Pancreas (tissue), 10 donors: ENCODE measurements at regions of chr14 and their contacts with region 1.

Region 1: DNA sequence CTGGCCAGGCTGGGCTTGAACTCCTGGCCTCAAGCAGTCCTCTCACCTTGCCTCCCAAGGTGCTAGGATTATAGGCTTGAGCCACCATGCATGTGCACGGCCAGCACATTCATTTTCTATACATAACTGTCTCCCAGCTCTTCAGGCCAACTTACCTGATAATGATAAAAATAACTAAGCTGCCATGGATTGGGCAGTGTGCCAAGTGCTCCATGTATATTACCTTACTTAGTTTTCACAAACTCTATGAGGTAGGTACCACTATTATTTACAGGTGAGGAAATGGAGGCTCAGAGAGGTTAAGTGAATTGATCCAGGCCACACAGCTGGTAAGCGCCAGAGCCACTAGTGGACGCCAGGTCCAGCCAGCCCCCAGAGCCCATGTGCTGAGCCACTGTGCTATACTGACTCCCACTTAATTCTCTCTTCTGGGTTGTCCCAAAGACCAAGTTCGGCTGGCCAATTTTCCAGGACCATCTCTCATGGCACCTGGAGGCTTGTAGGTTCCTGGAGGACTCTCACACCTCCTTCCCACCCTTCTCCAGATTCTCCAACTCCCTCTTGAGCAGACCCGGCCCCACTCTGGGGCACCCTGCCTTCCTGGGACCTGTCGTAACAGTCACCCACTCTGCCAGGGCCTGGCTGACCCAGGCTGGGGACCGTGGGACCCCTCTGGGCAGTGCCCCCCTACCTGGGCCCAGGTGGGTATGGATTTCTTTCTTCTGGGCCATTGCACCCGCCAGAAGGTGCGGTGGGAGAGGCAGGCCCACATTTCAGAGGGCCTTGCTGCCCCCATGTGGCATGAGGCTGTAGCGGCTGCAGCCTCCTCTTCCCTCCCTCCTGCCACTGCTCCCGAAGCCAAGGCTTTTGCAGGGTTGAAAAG is 30.2 kb upstream of the CIPC start:
- DNase-seq: peak; percentile 61 to 90 (median 78)
- ATAC-seq: peak; percentile 77 to 95 (median 92)
- H3K4me3 ChIP-seq: no peak overlapping the region
- H3K27ac ChIP-seq: no peak overlapping the region
- H3K4me1 ChIP-seq: no peaks in the 10 kb centered on the region
- H3K27me3 ChIP-seq: no peaks in the 10 kb centered on the region
- CTCF ChIP-seq: peak; percentile 71 to 85 (median 76)

Region 2: DNA sequence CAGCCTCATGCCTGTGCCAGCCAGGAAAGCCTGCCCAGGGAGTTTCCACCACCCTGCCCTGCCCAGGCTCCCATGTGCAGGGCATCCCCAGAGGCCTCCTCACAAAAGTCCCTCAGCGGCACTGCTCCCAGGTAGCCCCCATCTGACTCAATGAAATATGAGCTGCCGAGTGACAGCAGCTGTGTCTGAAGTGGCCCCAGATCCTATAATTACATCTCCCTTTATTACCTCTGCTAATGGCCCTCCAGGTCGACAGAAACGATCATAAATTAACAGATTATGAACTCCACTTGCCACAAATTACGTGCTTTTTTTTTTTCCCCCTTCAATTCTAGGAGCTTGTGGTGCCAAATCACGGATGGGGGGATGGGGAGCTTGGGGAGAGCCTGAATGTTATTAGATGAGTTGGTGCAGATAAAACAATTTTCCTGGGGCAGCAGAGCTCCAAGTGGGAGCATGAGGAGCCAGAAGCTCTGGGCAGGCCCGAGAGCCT is 581.6 kb before region 1 on chr14:
- intact Hi-C with region 1: no loop called
- DNase-seq: no peak
- ATAC-seq: peak in 1 of 4 donors; percentile 36
- H3K4me3 ChIP-seq: no peak overlapping the region
- H3K27ac ChIP-seq: no peak overlapping the region
- H3K4me1 ChIP-seq: no peaks in the 10 kb centered on the region
- H3K27me3 ChIP-seq: no peaks in the 10 kb centered on the region
- CTCF ChIP-seq: no peak

Region 3: GRCh38 chr14:76876076-76876475 is 191.8 kb before region 1 on chr14:
- intact Hi-C with region 1: loop called (anchors 2 to 10 kb)
- DNase-seq: peak in 5 of 6 donors; percentile 45 to 74 (median 64)
- ATAC-seq: peak; percentile 86 to 96 (median 96)
- H3K4me3 ChIP-seq: no peak overlapping the region
- H3K27ac ChIP-seq: no peak overlapping the region
- H3K4me1 ChIP-seq: no peaks in the 10 kb centered on the region
- H3K27me3 ChIP-seq: no peaks in the 10 kb centered on the region
- CTCF ChIP-seq: peak; percentile 69 to 90 (median 84)

Region 4: GRCh38 chr14:76882651-76883050 is 185.2 kb before region 1 on chr14:
- intact Hi-C with region 1: loop called in 2 of 3 experiments (anchors 5 to 10 kb)
- DNase-seq: no peak
- ATAC-seq: no peak
- H3K4me3 ChIP-seq: no peak overlapping the region
- H3K27ac ChIP-seq: no peak overlapping the region
- H3K4me1 ChIP-seq: no peaks in the 10 kb centered on the region
- H3K27me3 ChIP-seq: no peaks in the 10 kb centered on the region
- CTCF ChIP-seq: no peak

Region 5: DNA sequence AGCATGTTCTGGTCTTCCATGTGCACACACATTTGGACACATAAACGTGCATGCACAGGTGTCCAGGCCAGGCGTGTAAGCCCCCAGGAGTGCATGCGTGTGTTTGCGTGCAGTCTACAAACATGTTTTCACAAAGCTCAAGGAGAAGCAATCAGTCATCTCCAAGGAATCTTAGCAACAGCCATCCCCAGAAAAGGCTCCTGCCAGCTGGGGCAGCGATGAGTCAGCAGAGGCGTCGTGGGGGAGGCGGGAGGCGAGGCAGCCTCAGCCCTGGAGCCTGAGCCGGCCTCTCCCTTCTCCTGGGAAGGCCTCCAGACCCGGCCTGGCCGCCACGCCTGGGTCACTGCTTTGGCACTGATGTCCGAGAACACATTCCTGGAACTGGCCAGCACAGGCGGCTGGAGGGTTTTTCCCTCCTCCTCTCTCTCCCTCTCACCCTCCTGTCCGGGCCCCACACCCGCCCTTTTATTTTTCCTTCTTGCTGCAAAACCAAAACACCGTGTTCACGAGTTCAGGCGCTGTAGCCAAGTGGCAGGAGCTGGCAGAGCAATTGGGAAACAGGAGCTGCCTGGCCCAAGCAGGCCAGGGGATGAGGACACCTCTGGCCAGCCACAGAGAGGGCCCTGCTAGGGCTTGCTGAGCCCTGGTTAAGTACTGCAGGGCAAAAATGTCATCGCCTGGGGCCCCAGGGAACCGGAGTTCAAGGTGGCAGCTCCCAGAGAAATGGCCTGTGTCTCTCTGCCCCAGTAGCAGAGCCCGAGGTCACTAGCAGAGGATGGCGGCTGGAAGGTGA is 148.9 kb before region 1 on chr14:
- intact Hi-C with region 1: loop called in 1 of 3 experiments (anchors 10 kb)
- DNase-seq: peak; percentile 92 to 96 (median 94)
- ATAC-seq: peak; percentile 85 to 89 (median 88)
- H3K4me3 ChIP-seq: no peak overlapping the region
- H3K27ac ChIP-seq: peak overlapping the region; percentile 86 to 95 (median 90)
- H3K4me1 ChIP-seq: peaks cover 29 to 36% (median 31%) of the 10 kb centered on the region in 3 donors
- H3K27me3 ChIP-seq: no peaks in the 10 kb centered on the region
- CTCF ChIP-seq: no peak

Region 6: GRCh38 chr14:77243853-77244252 is 176.0 kb after region 1 on chr14:
- intact Hi-C with region 1: no loop called
- DNase-seq: peak in 1 of 6 donors; percentile 26
- ATAC-seq: no peak
- H3K4me3 ChIP-seq: no peak overlapping the region
- H3K27ac ChIP-seq: no peak overlapping the region
- H3K4me1 ChIP-seq: no peaks in the 10 kb centered on the region
- H3K27me3 ChIP-seq: no peaks in the 10 kb centered on the region
- CTCF ChIP-seq: no peak